ENCODE measurements at regions of chr2 and their contacts with region 1.

Region 1: GRCh38 chr2:101725515-101726192 is 28.1 kb downstream of the MAP4K4 start:
- DNase-seq: peak; percentile 47
- ATAC-seq: no peak
- H3K4me3 Mint-ChIP-seq: no peak overlapping the region
- H3K27ac Mint-ChIP-seq: peak overlapping the region; percentile 28
- H3K4me1 Mint-ChIP-seq: peaks cover 92% of the 10 kb centered on the region
- H3K27me3 Mint-ChIP-seq: no peaks in the 10 kb centered on the region
- CTCF ChIP-seq: peak; percentile 43

Region 2: GRCh38 chr2:101710471-101711318 is 15.0 kb before region 1 on chr2:
- CTCF ChIA-PET with region 1: interaction called, 10 read pairs
- POLR2A ChIA-PET with region 1: interaction called, 3 read pairs
- intact Hi-C with region 1: no loop called
- DNase-seq: no peak
- ATAC-seq: peak; percentile 90
- H3K4me3 Mint-ChIP-seq: peak overlapping the region; percentile 3
- H3K27ac Mint-ChIP-seq: peak overlapping the region; percentile 65
- H3K4me1 Mint-ChIP-seq: peaks cover 62% of the 10 kb centered on the region
- H3K27me3 Mint-ChIP-seq: no peaks in the 10 kb centered on the region
- CTCF ChIP-seq: no peak

Region 3: GRCh38 chr2:101736861-101737291 is 11.2 kb after region 1 on chr2:
- CTCF ChIA-PET with region 1: interaction called, 4 read pairs
- POLR2A ChIA-PET with region 1: interaction called, 11 read pairs
- intact Hi-C with region 1: no loop called
- DNase-seq: peak; percentile 72
- ATAC-seq: peak; percentile 77
- H3K4me3 Mint-ChIP-seq: no peak overlapping the region
- H3K27ac Mint-ChIP-seq: peak overlapping the region; percentile 7
- H3K4me1 Mint-ChIP-seq: peaks cover 75% of the 10 kb centered on the region
- H3K27me3 Mint-ChIP-seq: no peaks in the 10 kb centered on the region
- CTCF ChIP-seq: no peak

Measured in activated CD8-positive, alpha-beta T cell treated with anti-CD3 and anti-CD28 coated beads for 36 hours (primary cell).